ENCODE measurements at regions of chr7 and their contacts with region 1.

Region 1: GRCh38 chr7:116180302-116180701 is 30.0 kb upstream of the TES start:
- DNase-seq: no peak
- H3K4me3 ChIP-seq: no peak overlapping the region
- H3K27ac ChIP-seq: no peak overlapping the region
- H3K4me1 ChIP-seq: peaks cover 0 to 21% (median 0%) of the 10 kb centered on the region in 4 donors
- H3K27me3 ChIP-seq: no peaks in the 10 kb centered on the region
- CTCF ChIP-seq: peak; percentile 74 to 85

Region 2: GRCh38 chr7:115293628-115294240 is 886.6 kb before region 1 on chr7:
- intact Hi-C with region 1: no loop called
- DNase-seq: no peak
- H3K4me3 ChIP-seq: no peak overlapping the region
- H3K27ac ChIP-seq: no peak overlapping the region
- H3K4me1 ChIP-seq: no peaks in the 10 kb centered on the region
- H3K27me3 ChIP-seq: no peaks in the 10 kb centered on the region
- CTCF ChIP-seq: no peak

Region 3: DNA sequence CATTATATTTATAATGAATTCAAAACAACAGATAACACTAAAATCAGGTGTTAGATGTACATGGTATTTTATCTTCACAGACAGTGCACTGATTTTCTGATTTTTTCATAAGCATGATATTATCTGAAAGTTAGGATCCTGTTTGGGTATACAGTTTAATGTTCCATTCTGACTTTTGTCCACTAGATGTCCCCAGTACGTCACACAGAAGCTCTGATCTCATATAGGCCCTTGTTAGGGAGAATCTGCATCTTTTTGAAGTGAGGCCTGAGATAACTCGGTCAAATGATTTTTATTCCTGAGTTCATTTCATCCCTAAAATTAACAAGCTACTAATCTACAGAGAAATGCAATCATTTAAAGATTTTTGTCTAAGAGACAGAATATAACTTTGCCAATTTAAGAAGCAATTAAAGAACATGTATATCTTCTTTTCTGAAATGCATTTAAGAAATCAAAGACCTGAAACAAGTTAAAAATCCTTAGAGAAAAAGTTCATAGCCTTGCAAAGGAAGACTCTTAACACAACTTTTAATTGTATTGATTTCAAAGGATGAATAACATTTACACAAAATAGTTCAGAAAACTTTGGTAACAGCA is 42.0 kb before region 1 on chr7:
- intact Hi-C with region 1: no loop called
- DNase-seq: no peak
- H3K4me3 ChIP-seq: no peak overlapping the region
- H3K27ac ChIP-seq: no peak overlapping the region
- H3K4me1 ChIP-seq: no peaks in the 10 kb centered on the region
- H3K27me3 ChIP-seq: no peaks in the 10 kb centered on the region
- CTCF ChIP-seq: peak; percentile 73

Region 4: DNA sequence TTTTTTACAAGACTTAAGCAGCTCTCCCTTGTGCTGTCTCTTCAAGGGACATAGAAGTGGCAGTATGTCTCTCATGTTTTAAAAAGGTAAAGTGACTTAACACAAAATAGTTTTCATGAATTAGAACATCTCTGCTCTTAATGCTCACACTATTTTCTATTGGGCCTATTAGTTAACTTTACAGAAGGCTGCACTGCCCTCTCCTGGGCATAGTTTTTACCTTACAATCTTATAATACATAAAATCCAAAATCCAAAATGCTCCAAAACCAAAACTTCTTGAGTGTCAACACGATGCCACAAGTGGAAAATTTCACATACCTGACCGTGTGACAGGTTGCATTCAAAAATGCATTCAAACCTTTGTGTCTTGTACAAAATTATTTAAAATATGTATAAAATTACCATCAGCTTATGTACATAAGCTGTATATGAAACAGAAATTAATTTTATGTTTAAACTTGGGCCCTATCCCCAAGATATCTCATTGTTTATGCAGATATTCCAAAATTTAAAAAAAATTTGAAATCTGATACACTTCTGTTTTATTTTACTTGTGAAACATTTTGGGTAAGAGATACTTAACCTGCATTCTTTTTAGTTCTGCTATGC is 55.8 kb after region 1 on chr7:
- intact Hi-C with region 1: loop called (anchors 2 kb)
- DNase-seq: peak in 1 of 2 donors; percentile 63
- H3K4me3 ChIP-seq: no peak overlapping the region
- H3K27ac ChIP-seq: peak overlapping the region; percentile 61 to 90
- H3K4me1 ChIP-seq: peaks cover 0 to 97% (median 60%) of the 10 kb centered on the region in 4 donors
- H3K27me3 ChIP-seq: no peaks in the 10 kb centered on the region
- CTCF ChIP-seq: peak; percentile 49 to 77

Measured in tibial artery (tissue), 4 donors.